ENCODE measurements at regions of chr11 and their contacts with region 1.

Region 1: GRCh38 chr11:74726547-74727182 is 4.6 kb downstream of the CHRDL2 start:
- DNase-seq: peak; percentile 67
- ATAC-seq: peak; percentile 93
- H3K4me3 Mint-ChIP-seq: no peak overlapping the region
- H3K27ac Mint-ChIP-seq: no peak overlapping the region
- H3K4me1 Mint-ChIP-seq: no peaks in the 10 kb centered on the region
- H3K27me3 Mint-ChIP-seq: peaks cover 47% of the 10 kb centered on the region

Region 2: DNA sequence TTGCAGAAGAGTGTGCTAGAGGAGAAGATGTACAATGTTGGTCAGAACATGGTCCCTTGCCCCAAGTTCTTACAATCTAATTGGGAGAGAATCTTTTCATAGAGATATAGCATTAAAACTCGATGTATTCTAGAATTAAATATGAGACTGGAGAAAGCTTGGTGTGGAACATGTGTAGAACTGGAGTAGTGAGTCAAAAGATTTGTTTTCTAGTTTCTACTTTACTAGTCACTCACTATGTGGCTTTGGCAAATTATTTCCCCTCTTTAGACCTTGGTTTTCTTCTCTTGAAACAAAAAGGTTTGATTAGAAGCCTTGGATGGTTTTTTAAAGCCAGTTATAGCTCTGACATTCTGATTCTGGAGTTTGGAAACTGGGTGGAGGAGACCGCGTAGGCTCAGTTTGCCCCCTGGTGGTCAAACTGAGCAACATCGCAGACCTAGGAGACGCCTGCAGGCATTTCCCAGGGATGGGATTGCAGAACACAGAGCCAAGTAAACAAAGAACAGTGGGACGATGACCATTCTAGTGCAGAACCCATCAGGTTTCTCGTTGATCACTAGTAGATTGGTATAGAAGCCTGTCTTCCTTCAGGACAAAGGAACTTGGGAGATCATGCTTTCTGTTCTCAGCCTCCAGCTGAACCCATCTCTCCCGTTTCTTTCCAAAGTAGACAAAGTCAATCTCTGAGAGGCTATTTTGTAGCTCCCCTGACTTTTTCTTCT is 13.0 kb after region 1 on chr11:
- CTCF ChIA-PET with region 1: interaction called, 65 read pairs
- POLR2A ChIA-PET with region 1: no interaction called
- DNase-seq: peak; percentile 57
- ATAC-seq: peak; percentile 86
- H3K4me3 Mint-ChIP-seq: no peak overlapping the region
- H3K27ac Mint-ChIP-seq: no peak overlapping the region
- H3K4me1 Mint-ChIP-seq: no peaks in the 10 kb centered on the region
- H3K27me3 Mint-ChIP-seq: peaks cover 37% of the 10 kb centered on the region